GM18951 (cell line): ENCODE measurements at regions of chr2 and their contacts with region 1.

Region 1: DNA sequence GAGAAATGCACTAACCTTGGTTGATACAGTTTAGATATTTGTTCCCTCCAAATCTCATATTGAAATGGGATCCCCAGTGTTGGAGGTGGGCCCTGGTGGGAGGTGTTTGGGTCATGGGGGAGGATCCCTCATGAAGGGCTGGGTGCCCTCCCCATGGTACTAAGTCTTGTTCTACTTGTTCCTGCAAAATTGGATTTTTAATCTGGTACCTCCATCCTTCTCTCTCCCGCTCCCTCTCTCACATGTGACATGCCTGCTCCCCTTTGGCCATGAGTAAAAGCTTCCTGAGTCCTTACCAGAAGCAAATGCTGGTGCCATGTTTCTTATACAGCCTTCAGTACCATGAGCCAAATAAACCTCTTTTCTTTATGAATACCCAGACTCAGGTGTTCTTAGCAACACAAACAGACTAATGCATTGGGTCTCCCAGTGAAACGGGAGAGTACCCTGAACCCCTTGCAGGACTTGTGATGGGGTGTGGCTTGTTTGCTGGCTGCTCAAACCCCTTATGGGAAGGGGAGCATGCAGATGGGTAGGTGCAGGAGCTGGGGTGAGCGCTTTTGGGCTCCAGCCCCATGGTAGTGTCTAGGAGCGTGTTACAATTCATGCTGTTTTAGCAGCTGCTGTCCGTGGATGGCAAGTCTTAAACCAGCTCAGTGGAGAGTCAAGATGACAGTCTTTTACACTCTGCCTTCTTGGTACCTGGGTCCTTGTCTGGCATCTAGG is 27.2 kb downstream of the FAHD2B start:
- POLR2A ChIP-seq: no peak

Region 2: DNA sequence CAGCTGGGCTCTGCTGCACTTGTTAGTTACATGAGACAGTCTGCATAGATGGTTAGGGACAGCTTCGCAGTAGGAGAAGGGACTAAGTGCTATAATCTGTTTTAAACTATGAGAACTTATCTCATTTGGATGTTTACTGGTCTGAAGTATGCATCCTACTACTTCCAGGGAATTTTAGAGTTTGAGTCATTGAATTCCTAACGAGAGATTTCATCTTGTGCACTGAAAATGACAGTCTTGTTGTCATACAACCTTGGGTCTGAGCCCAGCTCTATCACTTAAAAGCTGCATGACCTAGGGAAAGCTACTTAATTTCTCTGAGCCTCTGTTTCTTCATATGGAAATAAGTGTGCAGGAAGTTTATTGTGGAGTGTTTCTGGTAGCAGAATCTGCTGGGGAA is 1397.3 kb before region 1 on chr2:
- in situ Hi-C with region 1: no loop called
- POLR2A ChIP-seq: no peak

Region 3: DNA sequence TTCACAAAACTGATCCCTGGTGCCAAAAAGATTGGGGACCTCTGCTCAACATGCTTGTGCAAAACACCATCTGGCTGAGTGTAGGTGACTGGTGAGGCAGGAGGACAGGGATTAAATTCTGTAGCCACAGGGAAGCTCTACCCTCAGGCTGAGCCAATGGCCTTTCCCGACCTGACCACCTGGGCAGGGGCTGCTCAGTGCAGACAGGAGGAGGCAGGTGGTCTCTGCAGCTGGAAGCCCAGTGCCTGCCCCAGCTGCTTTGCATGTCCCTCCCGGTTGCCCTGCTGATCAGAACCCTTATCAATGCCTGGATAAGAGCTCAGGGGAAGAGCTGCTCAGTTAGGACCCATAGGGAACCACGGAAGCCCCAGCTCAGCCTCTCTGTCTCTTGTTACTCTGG is 280.8 kb after region 1 on chr2:
- in situ Hi-C with region 1: loop called (anchors 25 kb)
- POLR2A ChIP-seq: no peak

Region 4: DNA sequence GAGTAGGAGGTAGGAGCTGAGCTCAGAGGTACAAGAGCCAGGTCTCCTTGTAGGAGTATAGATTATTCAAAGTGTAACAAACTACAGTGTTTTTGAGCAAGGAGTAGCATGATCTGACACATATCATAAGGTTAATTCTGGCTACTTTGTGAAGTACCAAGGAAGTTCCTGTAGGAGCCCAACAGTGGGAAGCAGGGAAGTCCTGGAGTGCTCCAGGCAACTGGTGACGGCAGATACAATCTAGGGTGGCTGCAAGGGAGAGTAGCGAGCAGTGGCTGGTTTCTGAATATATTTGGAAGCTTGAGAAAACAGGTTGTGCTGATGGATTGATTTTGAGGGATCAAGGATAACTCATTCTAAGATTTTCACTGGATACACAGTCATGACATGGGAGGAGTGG is 822.7 kb after region 1 on chr2:
- in situ Hi-C with region 1: no loop called
- POLR2A ChIP-seq: no peak